ENCODE measurements at regions of chr16 and their contacts with region 1.

Region 1: GRCh38 chr16:87847785-87848675 is 21.3 kb downstream of the SLC7A5 start:
- DNase-seq: no peak
- ATAC-seq: no peak
- H3K4me3 ChIP-seq: no peak overlapping the region
- H3K27ac ChIP-seq: no peak overlapping the region
- H3K4me1 ChIP-seq: peaks cover 8 to 82% of the 10 kb centered on the region in 2 experiments
- H3K27me3 ChIP-seq: no peaks in the 10 kb centered on the region
- CTCF ChIP-seq: no peak
- EP300 ChIP-seq: no peak
- POLR2A ChIP-seq: no peak
- RAD21 ChIP-seq: no peak

Region 2: DNA sequence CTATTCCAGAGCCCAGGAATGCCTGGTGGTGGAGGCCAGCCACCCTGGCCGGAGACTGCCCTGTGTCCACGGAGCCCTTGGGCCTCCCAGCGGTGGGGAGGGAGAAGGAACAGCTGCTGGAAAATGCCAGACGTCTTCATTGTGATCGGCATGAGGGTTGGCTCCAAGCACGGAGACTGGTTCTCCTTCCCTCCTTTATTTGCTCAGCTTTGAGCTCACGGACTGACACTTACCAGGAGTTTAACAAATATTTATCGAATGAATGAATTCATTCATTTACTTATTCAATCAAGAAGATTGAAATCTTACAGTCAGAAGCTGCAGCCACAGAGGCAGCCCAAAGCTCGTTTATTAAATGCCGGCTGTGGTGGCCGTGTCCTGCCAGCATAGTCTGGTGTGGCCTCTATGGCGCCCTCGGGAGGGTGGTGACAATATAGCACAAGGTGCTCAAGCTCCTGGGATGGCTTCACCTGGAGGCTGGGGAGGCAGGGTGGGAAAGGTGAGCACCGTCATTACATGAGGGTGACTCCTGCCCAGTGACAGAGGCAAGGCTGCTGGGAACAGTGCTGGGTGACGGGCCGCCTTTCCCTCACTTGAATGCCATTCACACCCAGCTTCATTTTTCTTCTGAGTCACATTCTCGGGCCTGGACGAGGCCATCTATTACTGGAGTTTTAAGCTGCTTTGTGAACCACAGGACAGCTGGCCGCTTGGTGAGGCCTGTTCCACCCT is 276.7 kb before region 1 on chr16:
- CTCF ChIA-PET with region 1: no interaction called
- POLR2A ChIA-PET with region 1: no interaction called
- in situ Hi-C with region 1: no loop called
- intact Hi-C with region 1: no loop called
- DNase-seq: peak; percentile 59 to 68 (median 64)
- ATAC-seq: peak; percentile 90
- H3K4me3 ChIP-seq: no peak overlapping the region
- H3K27ac ChIP-seq: no peak overlapping the region
- H3K4me1 ChIP-seq: peaks cover 0 to 7% of the 10 kb centered on the region in 2 experiments; a peak in 4 of 5 replicates
- H3K27me3 ChIP-seq: peaks cover 26 to 78% of the 10 kb centered on the region in 2 experiments
- CTCF ChIP-seq: peak; percentile 63 to 71 (median 70)
- EP300 ChIP-seq: no peak
- POLR2A ChIP-seq: no peak
- RAD21 ChIP-seq: peak in 1 of 2 experiments; percentile 49; a peak in 2 of 4 replicates

Region 3: DNA sequence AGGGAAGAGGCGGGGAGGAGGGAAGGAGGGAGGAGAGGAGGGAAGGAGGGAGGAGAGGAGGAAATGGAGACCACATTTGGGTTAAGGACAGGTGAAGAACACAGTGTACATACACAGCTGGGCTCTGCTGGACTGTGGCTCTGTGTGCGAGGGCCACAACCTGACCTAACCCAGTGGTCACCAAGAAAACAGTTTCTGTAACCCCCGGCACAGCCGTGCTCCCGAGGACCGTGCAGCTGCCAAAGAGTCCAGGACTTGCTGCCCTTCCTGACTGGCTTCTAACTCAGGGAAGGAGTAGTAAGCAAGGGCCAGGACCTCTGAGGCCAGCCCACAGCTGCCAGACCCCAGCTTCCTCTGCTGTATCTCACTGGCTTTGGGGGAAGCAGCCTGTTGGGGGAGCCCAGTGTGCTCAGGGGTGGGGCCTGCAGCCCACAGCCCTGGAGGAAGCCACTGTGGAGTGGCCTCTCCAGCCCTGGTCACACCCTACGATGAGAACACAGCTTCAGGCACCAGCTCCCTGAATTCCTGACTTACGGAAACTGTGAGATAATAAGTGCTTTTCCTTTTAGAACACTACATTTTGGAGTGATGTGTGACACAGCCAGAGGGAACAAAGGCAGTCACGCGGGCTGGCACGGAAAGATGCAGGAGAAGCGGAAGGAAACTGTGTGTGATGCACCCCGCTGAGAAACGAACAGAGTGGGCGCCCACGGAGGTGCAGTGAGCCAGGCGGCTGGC is 11.0 kb before region 1 on chr16:
- CTCF ChIA-PET with region 1: no interaction called
- POLR2A ChIA-PET with region 1: interaction called, 12 read pairs
- in situ Hi-C with region 1: no loop called
- intact Hi-C with region 1: no loop called
- DNase-seq: no peak
- ATAC-seq: no peak
- H3K4me3 ChIP-seq: no peak overlapping the region
- H3K27ac ChIP-seq: no peak overlapping the region
- H3K4me1 ChIP-seq: peaks cover 0 to 41% of the 10 kb centered on the region in 2 experiments; a peak in 1 of 5 replicates
- H3K27me3 ChIP-seq: no peaks in the 10 kb centered on the region
- CTCF ChIP-seq: no peak
- EP300 ChIP-seq: no peak
- POLR2A ChIP-seq: 0 out of 2 replicates have a peak, but pooled peaks have one; percentile 23
- RAD21 ChIP-seq: no peak

Region 4: GRCh38 chr16:88026964-88027938 is 179.2 kb after region 1 on chr16:
- CTCF ChIA-PET with region 1: no interaction called
- POLR2A ChIA-PET with region 1: no interaction called
- in situ Hi-C with region 1: no loop called
- intact Hi-C with region 1: no loop called
- DNase-seq: no peak
- ATAC-seq: no peak
- H3K4me3 ChIP-seq: no peak overlapping the region
- H3K27ac ChIP-seq: no peak overlapping the region
- H3K4me1 ChIP-seq: peaks cover 0 to 3% of the 10 kb centered on the region in 2 experiments; a peak in 1 of 5 replicates
- H3K27me3 ChIP-seq: no peaks in the 10 kb centered on the region
- CTCF ChIP-seq: no peak
- EP300 ChIP-seq: no peak
- POLR2A ChIP-seq: no peak
- RAD21 ChIP-seq: no peak